Activated CD4-positive, alpha-beta memory T cell treated with anti-CD3 and anti-CD28 coated beads for 36 hours (primary cell): ENCODE measurements at regions of chr9 and their contacts with region 1.

Region 1: DNA sequence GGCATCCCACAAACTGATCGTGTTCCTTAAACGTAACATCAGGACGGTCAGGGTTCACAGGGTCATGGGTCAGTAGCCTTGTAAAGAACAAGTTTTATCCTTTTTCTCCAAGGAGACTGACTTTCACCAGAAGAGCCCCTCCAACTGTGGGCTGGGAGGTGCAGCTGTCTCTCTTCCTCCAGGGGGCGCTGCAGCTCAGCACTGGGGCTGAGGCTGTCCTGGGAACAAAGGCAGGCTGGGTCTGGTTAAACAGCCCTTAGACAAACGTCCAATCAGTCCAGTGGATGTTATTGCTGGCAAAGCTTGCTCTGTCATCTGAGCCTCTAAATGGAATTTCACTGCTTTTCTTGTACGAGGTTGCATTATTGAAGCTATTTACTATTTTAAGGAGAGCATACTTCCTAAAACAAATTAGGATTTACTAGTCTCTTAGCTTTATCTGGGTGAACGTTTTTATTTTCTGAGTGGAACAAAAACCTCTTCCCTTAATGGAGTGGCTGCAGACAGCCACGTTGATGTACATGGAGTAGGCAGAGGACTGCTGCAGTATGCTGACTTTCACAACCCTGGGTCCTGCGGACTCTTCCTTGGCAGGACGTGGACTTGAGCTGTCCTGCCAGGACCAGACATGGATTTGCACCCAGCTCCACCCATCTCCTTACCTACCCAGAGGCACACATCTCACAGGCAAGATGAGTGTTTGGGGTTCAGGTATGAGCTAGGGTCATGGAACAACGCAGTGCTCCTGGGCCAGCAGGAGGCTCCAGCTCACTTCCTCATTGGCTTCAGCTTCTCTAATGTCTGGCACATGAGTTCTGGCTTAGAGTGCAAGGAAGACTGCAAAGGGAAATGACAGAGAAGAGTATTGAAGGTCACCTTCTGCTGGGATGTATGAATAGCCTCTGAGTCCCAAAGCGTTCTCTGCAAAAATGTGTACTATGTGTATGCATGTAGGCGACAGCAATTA is 7.8 kb downstream of the EXOSC2 start:
- DNase-seq: peak; percentile 76
- H3K4me3 Mint-ChIP-seq: no peak overlapping the region
- H3K27ac Mint-ChIP-seq: no peak overlapping the region
- H3K4me1 Mint-ChIP-seq: peaks cover 20% of the 10 kb centered on the region
- H3K27me3 Mint-ChIP-seq: no peaks in the 10 kb centered on the region

Region 2: GRCh38 chr9:130732131-130732530 is 30.8 kb after region 1 on chr9:
- CTCF ChIA-PET with region 1: interaction called, 15 read pairs
- POLR2A ChIA-PET with region 1: no interaction called
- intact Hi-C with region 1: no loop called
- DNase-seq: no peak
- H3K4me3 Mint-ChIP-seq: no peak overlapping the region
- H3K27ac Mint-ChIP-seq: no peak overlapping the region
- H3K4me1 Mint-ChIP-seq: peaks cover 19% of the 10 kb centered on the region
- H3K27me3 Mint-ChIP-seq: no peaks in the 10 kb centered on the region

Region 3: DNA sequence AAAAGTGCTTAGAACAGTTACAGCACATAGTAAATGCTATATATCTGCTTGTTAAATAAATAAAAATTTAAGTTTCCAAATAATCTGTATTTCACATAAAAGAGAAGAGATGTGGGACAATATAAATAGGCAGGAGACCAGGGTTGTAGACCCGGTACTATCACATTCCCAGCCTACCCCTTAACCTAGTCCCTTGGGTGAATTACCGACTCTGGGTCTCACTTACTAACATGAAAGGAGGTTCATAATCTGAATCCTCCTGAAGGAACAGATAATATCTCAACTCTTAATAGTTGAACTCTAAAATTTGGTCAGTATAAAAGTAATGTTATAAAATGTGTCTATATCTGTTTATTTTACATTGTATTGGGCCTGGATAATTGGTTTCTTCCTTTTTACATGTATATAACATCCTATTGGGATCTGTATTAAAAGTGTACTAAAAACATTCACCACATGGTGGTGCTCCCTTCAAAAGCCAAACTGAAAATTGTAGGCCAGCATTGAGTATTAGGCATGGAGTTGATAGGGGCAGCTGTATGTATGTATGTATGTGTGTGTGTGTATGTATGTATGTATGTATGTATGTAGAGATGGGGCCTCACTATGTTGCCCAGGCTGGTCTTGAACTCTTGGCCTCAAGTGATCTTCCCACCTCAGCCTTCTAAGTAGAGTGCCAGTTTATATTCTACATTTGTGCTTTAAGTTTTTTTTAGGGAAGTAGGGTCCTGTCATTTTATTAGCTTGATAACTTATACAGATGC is 69.5 kb after region 1 on chr9:
- CTCF ChIA-PET with region 1: interaction called, 13 read pairs
- POLR2A ChIA-PET with region 1: no interaction called
- intact Hi-C with region 1: no loop called
- DNase-seq: no peak
- H3K4me3 Mint-ChIP-seq: no peak overlapping the region
- H3K27ac Mint-ChIP-seq: no peak overlapping the region
- H3K4me1 Mint-ChIP-seq: peaks cover 19% of the 10 kb centered on the region
- H3K27me3 Mint-ChIP-seq: no peaks in the 10 kb centered on the region

Region 4: DNA sequence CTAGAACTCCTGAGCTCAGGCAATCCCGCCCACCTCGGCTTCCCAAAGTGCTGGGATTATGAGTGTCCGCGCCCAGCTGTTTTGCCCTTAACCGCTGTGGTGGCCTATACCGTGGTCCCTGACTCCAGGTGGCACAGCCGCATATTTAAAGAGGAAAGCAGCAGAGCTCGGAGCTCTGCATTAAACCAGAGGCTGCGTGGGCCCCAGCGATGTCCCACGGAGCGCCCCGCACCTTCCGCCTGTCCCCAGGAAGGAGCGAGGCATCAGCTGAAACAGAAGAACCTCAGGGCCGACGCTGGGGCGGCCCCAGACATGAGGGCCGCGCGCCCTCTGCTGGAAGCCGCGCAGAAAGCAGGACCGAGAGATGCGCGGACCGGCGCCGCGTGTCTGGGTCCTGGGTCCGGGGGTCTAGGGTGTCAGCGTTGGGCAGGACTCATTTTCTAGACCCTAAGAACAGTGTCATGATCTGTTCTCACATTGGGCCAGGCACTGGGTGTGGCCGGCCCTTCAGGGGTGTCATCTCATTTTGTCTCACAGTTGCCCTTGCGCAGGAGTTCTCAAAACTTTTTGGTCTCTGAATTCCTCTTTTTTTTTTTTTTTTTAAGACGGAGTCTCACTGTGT is 345.4 kb after region 1 on chr9:
- CTCF ChIA-PET with region 1: interaction called, 13 read pairs
- POLR2A ChIA-PET with region 1: no interaction called
- intact Hi-C with region 1: no loop called
- DNase-seq: peak; percentile 81
- H3K4me3 Mint-ChIP-seq: no peak overlapping the region
- H3K27ac Mint-ChIP-seq: no peak overlapping the region
- H3K4me1 Mint-ChIP-seq: peaks cover 4% of the 10 kb centered on the region
- H3K27me3 Mint-ChIP-seq: peaks cover 1% of the 10 kb centered on the region